Body of pancreas (tissue), 4 donors: ENCODE measurements at regions of chrX and their contacts with region 1.

Region 1: DNA sequence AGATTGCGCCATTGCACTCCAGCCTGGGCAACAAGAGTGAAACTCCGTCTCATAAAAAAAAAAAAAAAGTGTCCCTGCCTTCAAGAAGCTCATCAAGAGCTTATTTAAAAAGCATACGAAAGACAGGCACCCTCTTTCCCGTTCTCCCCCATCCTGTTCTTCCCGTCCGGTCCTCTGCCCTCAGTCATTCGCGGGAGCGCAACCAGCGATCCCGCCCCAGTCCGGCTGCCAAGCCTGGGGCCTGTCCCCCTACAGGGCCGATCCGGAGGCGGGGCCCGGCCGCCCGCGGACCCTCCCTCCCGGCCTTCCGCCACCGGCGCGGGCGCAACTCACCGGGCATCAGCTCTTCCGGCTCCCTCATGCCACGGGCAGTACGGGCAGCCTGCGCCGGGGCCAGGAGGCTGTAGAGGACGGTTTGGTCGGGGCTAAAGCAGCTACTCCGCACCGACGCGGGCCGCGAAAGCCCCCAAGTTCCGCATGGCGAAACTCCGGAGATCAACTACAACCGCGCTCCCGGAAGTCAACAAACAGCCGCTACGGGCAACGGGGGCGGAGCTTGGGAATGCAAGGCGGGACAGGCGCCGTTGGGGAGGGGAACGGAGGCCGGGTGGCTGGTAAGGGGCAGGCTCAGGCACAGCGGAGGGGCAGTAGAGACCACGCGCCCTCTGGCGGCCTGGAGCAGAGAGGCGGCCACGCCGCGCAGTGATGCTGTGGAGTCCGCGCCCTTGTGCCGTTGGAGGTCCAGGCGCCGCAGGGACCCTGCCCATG is at the start of gene RPGR:
- DNase-seq: peak; percentile 94 to 95 (median 95)
- ATAC-seq: peak; percentile 99
- H3K4me3 ChIP-seq: peak within 1 kb of the TSS; percentile 32 to 58
- H3K27ac ChIP-seq: peak within 1 kb of the TSS; percentile 74 to 94 (median 87)
- H3K4me1 ChIP-seq: peaks cover 10% of the 10 kb centered on the region
- H3K27me3 ChIP-seq: no peaks in the 10 kb centered on the region
- CTCF ChIP-seq: peak; percentile 61 to 92 (median 82)
- POLR2A ChIP-seq: peak; percentile 44 to 86 (median 78)
- total RNA-seq, gene RPGR: 14.8 to 21.1 TPM

Region 2: DNA sequence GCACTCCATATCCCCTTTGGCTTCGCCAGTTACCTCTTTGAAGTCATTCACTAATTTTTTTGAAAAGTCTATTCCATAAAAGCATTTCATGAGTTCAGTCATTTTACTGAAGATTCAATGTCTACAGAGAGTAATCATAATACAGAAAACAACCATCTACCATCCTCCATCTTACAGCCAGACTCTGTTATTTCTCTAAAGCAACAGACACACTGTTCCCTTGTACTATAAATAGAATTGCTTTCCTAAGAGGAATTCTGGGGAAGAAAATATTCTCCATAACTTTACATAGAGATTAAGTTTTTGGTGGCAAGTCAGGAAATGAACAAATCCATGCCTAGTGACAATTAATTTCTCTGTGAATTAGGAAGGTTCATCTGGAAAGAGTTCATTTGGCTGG is 604.6 kb before region 1 on chrX:
- intact Hi-C with region 1: no loop called
- DNase-seq: no peak
- ATAC-seq: no peak
- H3K4me3 ChIP-seq: no peak overlapping the region
- H3K27ac ChIP-seq: no peak overlapping the region
- H3K4me1 ChIP-seq: no peaks in the 10 kb centered on the region
- H3K27me3 ChIP-seq: no peaks in the 10 kb centered on the region
- CTCF ChIP-seq: no peak
- POLR2A ChIP-seq: no peak

Region 3: GRCh38 chrX:38036466-38036865 is 290.7 kb before region 1 on chrX:
- intact Hi-C with region 1: no loop called
- DNase-seq: no peak
- ATAC-seq: no peak
- H3K4me3 ChIP-seq: no peak overlapping the region
- H3K27ac ChIP-seq: no peak overlapping the region
- H3K4me1 ChIP-seq: peaks cover 6% of the 10 kb centered on the region
- H3K27me3 ChIP-seq: no peaks in the 10 kb centered on the region
- CTCF ChIP-seq: no peak
- POLR2A ChIP-seq: no peak

Region 4: GRCh38 chrX:38260231-38260630 is 67.0 kb before region 1 on chrX:
- intact Hi-C with region 1: loop called (anchors 10 kb)
- DNase-seq: peak in 3 of 4 donors; percentile 6 to 23 (median 16)
- ATAC-seq: no peak
- H3K4me3 ChIP-seq: no peak overlapping the region
- H3K27ac ChIP-seq: no peak overlapping the region
- H3K4me1 ChIP-seq: no peaks in the 10 kb centered on the region
- H3K27me3 ChIP-seq: no peaks in the 10 kb centered on the region
- CTCF ChIP-seq: peak in 6 of 7 experiments; percentile 5 to 36 (median 24)
- POLR2A ChIP-seq: no peak